Activated T-helper 2 cell treated with anti-CD3 and anti-CD28 coated beads, Interferon-gamma antibody, Interleukin-2, Interleukin-4, amounts not matched to agents 10 μg/mL and 5 μg/mL and 100 μg/mL, durations not matched to agents 14 hours and 24 hours and 36 hours (primary cell): ENCODE measurements at regions of chr4 and their contacts with region 1.

Region 1: GRCh38 chr4:25144870-25145481 is 15.3 kb downstream of the SEPSECS start:
- DNase-seq: no peak
- H3K4me3 Mint-ChIP-seq: no peak overlapping the region
- H3K27ac Mint-ChIP-seq: no peak overlapping the region
- H3K4me1 Mint-ChIP-seq: peaks cover 3% of the 10 kb centered on the region
- H3K27me3 Mint-ChIP-seq: no peaks in the 10 kb centered on the region

Region 2: DNA sequence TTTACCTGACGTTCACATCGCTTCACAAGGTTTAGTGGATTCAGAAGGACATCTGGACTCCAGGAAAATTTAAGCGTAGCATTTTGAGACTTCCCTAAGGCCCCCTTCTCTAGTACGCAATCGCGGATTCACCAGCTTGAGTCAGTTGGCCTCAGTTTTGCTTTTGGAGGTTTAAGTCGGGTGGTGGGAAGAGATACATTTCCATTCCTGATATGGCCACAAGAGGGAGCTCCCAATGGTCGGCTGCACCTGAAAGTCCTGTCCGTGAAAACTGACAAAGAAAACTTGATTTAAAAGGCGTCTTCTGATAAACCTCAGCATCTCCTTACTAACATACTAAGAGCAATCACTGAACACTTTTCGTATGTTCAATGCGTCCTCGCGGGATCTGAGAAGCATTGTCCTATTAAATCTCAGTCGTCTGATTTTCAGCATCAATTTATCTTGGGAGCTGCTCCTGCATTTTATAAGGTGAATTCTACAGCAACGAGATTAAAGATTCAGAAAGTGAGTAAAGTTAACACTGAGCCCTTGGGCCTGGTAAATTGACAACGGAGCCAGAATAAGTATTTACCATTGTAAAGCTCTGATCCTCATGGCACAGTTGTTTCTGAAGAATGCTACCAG is 164.8 kb before region 1 on chr4:
- intact Hi-C with region 1: loop called (anchors 2 kb)
- DNase-seq: peak; percentile 32
- H3K4me3 Mint-ChIP-seq: no peak overlapping the region
- H3K27ac Mint-ChIP-seq: no peak overlapping the region
- H3K4me1 Mint-ChIP-seq: peaks cover 15% of the 10 kb centered on the region
- H3K27me3 Mint-ChIP-seq: peaks cover 10% of the 10 kb centered on the region

Region 3: GRCh38 chr4:25346913-25347312 is 201.9 kb after region 1 on chr4:
- intact Hi-C with region 1: no loop called
- DNase-seq: no peak
- H3K4me3 Mint-ChIP-seq: no peak overlapping the region
- H3K27ac Mint-ChIP-seq: no peak overlapping the region
- H3K4me1 Mint-ChIP-seq: peaks cover 3% of the 10 kb centered on the region
- H3K27me3 Mint-ChIP-seq: no peaks in the 10 kb centered on the region